Vagina (tissue), 2 donors: ENCODE measurements at regions of chr7 and their contacts with region 1.

Region 1: DNA sequence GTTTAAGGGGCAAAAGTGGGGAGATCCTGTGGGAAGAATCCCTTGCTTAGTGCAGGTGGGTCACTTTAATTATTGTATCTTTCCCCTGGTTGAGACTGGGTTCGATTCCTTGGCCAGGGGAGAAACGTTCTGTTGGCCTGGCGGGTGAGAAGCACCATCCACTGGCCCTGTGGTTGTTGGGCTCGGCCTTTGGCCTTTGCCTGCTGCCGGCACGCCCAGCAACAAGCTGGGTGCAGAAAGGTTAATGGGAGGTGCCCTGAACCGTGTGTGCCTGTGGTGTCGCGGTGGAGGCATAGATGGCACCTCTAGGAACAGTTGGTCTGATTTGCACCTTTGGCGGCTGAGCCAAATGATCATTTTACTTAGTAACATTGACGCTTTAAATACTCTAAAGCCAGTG is 363.6 kb upstream of the CNTNAP2 start:
- DNase-seq: no peak
- H3K4me3 ChIP-seq: no peak overlapping the region
- H3K27ac ChIP-seq: no peak overlapping the region
- H3K4me1 ChIP-seq: no peaks in the 10 kb centered on the region
- H3K27me3 ChIP-seq: no peaks in the 10 kb centered on the region
- CTCF ChIP-seq: no peak
- POLR2A ChIP-seq: no peak

Region 2: GRCh38 chr7:145474009-145474686 is 278.9 kb before region 1 on chr7:
- intact Hi-C with region 1: no loop called
- DNase-seq: no peak
- H3K4me3 ChIP-seq: no peak overlapping the region
- H3K27ac ChIP-seq: no peak overlapping the region
- H3K4me1 ChIP-seq: no peaks in the 10 kb centered on the region
- H3K27me3 ChIP-seq: no peaks in the 10 kb centered on the region
- CTCF ChIP-seq: no peak
- POLR2A ChIP-seq: no peak

Region 3: DNA sequence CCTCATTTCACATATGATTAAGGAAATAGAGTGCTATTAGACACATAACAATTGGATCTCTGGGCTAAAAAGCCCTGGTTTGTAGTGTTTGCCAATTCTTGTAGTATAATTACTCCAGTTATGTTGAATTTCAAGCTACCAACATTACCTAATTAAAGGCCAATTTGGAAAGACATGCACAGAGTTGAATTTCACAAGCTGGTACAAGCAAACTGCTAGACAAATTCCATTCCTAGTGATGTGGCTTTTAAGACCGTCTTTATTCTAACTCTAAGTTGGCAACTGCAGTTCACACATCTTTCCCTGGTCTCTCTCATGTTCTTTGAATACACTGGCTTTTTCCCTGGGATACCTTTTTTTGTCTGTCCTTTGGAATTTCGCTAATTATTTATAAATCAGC is 20.5 kb before region 1 on chr7:
- intact Hi-C with region 1: loop called (anchors 1 kb)
- DNase-seq: no peak
- H3K4me3 ChIP-seq: no peak overlapping the region
- H3K27ac ChIP-seq: no peak overlapping the region
- H3K4me1 ChIP-seq: no peaks in the 10 kb centered on the region
- H3K27me3 ChIP-seq: no peaks in the 10 kb centered on the region
- CTCF ChIP-seq: no peak
- POLR2A ChIP-seq: no peak